Naive thymus-derived CD8-positive, alpha-beta T cell (primary cell): ENCODE measurements at regions of chr7 and their contacts with region 1.

Region 1: DNA sequence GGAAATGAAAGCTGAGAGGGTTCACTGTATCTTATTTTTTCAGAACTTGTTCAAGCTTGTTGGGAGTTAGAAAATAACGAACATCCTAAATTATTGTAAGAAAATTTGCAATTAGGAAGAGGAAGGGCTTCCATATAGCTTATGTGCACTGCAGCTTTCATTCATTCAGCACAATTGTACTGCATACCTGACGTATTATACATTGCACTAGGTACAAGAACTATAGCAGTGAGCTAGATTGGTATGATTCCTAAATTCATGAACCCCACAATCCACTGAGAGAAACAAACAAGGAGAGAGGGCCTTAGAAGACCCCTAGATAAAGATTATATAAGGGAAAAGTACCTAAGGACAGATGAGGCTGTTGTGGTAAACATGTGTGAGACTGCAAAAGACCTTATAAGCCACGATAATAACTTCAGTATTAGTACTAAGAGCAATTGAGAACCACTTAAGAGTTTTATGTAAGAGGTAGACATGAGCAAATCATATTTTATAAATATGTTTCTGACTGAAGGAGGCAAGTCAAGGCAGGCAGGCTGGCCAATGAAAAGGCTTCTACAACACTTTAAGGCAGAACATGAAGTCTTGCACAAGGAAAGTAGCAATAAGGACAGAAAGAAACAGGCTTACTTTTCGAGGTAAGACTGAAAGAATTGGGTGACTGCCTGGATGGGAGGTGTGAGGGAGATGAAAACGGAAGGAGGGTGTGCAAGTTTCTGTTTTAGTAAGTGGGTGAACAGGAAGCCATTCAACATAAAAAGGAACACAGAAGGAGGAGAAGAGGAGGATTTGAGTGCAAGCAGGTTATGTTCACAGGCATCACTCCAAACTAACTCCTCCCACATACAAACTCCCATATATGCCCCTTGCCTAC is 77.9 kb upstream of the LRRN3 start:
- DNase-seq: peak in 9 of 10 donors; percentile 19 to 75 (median 42)
- ATAC-seq: peak; percentile 83 to 88
- H3K4me3 Mint-ChIP-seq: peak overlapping the region; percentile 63 to 87 (median 80)
- H3K27ac Mint-ChIP-seq: peak overlapping the region in 9 of 10 donors; percentile 87 to 94 (median 90)
- H3K4me1 Mint-ChIP-seq: peaks cover 32 to 74% (median 70%) of the 10 kb centered on the region in 4 donors
- H3K27me3 Mint-ChIP-seq: no peaks in the 10 kb centered on the region

Region 2: DNA sequence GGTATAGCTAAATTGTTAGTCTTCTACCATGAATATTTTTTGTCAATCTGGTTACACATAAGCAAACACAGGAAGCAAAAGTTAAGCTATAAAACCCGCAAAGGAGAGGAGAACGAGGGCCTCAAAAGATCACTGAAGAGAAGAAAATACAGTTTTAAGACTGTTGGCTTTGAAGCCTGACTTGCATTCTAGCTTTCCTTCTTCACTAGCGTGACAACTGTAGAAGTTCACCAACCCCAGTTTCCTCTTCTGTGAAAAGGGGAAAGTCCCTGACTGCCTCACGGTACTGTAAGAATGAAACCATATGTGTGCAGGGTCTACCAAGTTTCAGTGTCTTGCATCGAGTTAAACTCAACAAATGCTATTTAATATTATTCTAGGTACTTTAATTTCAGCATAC is 70.4 kb after region 1 on chr7:
- POLR2A ChIA-PET with region 1: interaction called, 13 read pairs
- DNase-seq: peak in 9 of 10 donors; percentile 42 to 89 (median 69)
- ATAC-seq: peak; percentile 94 to 98
- H3K4me3 Mint-ChIP-seq: peak overlapping the region; percentile 54 to 84 (median 66)
- H3K27ac Mint-ChIP-seq: peak overlapping the region; percentile 80 to 97 (median 87)
- H3K4me1 Mint-ChIP-seq: peaks cover 23 to 73% (median 64%) of the 10 kb centered on the region in 4 donors
- H3K27me3 Mint-ChIP-seq: no peaks in the 10 kb centered on the region

Region 3: GRCh38 chr7:111089822-111090426 is 76.9 kb after region 1 on chr7:
- POLR2A ChIA-PET with region 1: interaction called, 11 read pairs
- DNase-seq: peak in 3 of 10 donors; percentile 44 to 59 (median 51)
- ATAC-seq: peak; percentile 14 to 39
- H3K4me3 Mint-ChIP-seq: peak overlapping the region; percentile 86 to 100 (median 98)
- H3K27ac Mint-ChIP-seq: peak overlapping the region in 7 of 10 donors; percentile 66 to 96 (median 92)
- H3K4me1 Mint-ChIP-seq: peaks cover 15 to 45% (median 42%) of the 10 kb centered on the region in 4 donors
- H3K27me3 Mint-ChIP-seq: no peaks in the 10 kb centered on the region